ENCODE measurements at regions of chr14 and their contacts with region 1.

Region 1: DNA sequence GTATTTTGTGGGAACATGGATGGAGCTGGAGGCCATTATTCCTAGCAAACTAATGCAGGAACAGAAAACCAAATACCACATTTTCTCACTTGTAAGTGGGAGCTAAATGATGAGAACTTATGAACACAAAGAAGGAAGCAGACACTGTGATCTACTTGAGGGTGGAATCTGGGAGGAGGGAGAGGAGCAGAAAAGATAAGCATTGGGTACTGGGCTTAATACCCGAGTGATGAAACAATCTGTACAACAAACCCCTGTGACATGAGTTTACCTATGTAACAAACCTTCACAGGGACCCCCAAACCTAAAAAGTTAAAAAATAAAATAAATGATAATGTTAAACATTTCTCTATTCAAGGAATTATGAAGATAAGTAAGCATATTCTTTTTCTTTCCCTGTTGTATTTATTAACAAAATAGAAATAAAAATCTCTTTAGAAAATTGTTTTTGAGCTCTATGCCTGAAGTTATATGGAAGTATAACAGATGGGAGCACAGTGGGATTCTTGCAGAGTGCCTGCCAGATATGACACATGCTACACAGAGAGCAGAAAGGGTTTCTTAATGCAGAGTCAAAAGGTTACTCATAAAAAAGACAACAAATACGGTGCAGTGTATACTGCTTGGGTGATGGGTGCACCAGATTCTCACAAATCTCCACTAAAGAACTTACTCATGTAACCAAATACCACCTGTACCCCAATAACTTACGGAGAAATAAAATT is 52.0 kb upstream of the SYNE2 start:
- DNase-seq: no peak
- H3K4me3 Mint-ChIP-seq: no peak overlapping the region
- H3K27ac Mint-ChIP-seq: no peak overlapping the region
- H3K4me1 Mint-ChIP-seq: no peaks in the 10 kb centered on the region
- H3K27me3 Mint-ChIP-seq: no peaks in the 10 kb centered on the region
- CTCF ChIP-seq: no peak

Region 2: DNA sequence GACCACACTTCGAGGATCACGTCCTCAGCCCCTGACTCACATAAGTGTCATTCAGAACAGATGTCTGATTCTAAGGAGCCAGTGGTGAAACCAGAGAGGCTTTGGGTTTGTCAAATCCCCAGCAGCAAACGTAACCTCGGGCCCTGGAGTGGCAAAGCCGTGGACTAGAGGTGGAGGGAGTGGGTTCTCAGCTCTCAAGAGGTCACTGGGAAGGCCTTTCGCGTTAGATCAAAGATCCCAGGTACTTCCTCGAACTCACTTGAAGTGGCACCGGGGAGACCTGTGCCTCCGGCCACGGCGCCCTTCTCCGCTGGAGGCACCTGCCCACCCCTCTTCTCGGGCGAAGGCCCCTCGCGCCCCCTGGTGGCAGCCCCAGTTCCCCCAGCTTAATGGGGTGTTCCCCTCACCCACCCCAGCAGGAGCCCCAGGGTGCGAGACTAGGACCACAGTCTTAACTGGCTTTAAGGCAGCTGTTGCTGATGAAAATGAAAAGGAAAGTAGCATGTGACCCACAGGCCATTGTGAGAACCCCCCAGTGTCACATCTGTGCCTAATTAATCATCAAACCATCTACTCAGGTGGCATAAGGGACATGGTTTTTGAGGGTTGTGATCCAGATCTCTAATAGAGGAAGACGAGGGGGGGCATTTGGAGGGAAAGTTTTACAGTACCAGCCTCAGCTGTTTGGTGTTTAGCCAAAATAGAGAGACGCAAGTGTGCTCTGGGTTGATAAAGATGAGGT is 494.0 kb after region 1 on chr14:
- CTCF ChIA-PET with region 1: no interaction called
- intact Hi-C with region 1: loop called (anchors 2 kb)
- DNase-seq: peak; percentile 92
- H3K4me3 Mint-ChIP-seq: peak overlapping the region; percentile 68
- H3K27ac Mint-ChIP-seq: no peak overlapping the region
- H3K4me1 Mint-ChIP-seq: no peaks in the 10 kb centered on the region
- H3K27me3 Mint-ChIP-seq: no peaks in the 10 kb centered on the region
- CTCF ChIP-seq: peak; percentile 95

Measured in Calu3 (cell line).